Psoas muscle (tissue), 8 donors: ENCODE measurements at regions of chr5 and their contacts with region 1.

Region 1: GRCh38 chr5:75286211-75286773 is 49.6 kb upstream of the ANKRD31 start:
- DNase-seq: no peak
- ATAC-seq: no peak
- H3K4me3 ChIP-seq: no peak overlapping the region
- H3K27ac ChIP-seq: no peak overlapping the region
- H3K4me1 ChIP-seq: no peaks in the 10 kb centered on the region
- H3K27me3 ChIP-seq: no peaks in the 10 kb centered on the region
- CTCF ChIP-seq: no peak

Region 2: GRCh38 chr5:74127381-74128320 is 1158.6 kb before region 1 on chr5:
- intact Hi-C with region 1: no loop called
- DNase-seq: no peak
- ATAC-seq: peak; percentile 27 to 64 (median 42)
- H3K4me3 ChIP-seq: peak overlapping the region; percentile 26
- H3K27ac ChIP-seq: no peak overlapping the region
- H3K4me1 ChIP-seq: peaks cover 9% of the 10 kb centered on the region
- H3K27me3 ChIP-seq: no peaks in the 10 kb centered on the region
- CTCF ChIP-seq: peak; percentile 29

Region 3: DNA sequence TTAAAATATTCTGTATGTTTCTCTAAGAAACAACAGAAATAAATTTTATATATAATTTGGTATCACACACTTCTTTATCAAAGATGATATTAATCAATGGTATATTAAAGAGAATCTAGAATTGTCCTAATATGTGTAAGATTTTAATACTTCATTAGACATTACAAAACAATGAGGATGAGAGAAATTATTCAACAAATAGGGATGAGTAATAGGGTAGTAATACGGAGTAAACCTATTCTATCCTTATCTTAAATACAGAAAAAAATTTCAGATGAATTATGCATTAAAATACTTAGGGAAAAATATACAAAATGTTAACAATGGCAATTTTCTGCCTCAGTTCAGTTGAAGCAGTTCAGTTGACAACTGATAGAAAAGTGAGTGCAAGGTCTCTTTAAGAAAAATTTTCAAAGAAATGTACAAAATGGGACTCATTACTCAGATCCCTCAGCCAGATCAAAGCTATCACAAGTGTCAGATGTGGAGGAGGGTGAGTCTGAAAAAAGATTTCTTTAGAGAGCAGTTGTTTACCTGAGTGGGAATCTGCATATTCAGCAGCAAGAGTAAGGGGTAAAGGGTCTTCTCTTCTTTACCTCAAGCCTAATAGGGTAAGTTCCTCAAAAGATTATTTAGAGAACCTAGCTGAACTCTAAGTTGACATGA is 177.2 kb before region 1 on chr5:
- intact Hi-C with region 1: no loop called
- DNase-seq: no peak
- ATAC-seq: no peak
- H3K4me3 ChIP-seq: no peak overlapping the region
- H3K27ac ChIP-seq: no peak overlapping the region
- H3K4me1 ChIP-seq: no peaks in the 10 kb centered on the region
- H3K27me3 ChIP-seq: no peaks in the 10 kb centered on the region
- CTCF ChIP-seq: no peak

Region 4: GRCh38 chr5:76451031-76451701 is 1164.9 kb after region 1 on chr5:
- intact Hi-C with region 1: loop called in 1 of 2 experiments (anchors 5 kb)
- DNase-seq: no peak
- ATAC-seq: no peak
- H3K4me3 ChIP-seq: no peak overlapping the region
- H3K27ac ChIP-seq: no peak overlapping the region
- H3K4me1 ChIP-seq: no peaks in the 10 kb centered on the region
- H3K27me3 ChIP-seq: no peaks in the 10 kb centered on the region
- CTCF ChIP-seq: no peak